ENCODE measurements at regions of chr1 and their contacts with region 1.

Region 1: GRCh38 chr1:169893494-169894362 is at the start of gene SCYL3:
- DNase-seq: peak; percentile 85 to 97 (median 95)
- ATAC-seq: peak; percentile 92
- H3K4me3 ChIP-seq: peak within 1 kb of the TSS; percentile 77
- H3K4me3 Mint-ChIP-seq: peak within 1 kb of the TSS; percentile 85 to 97 (median 94)
- H3K27ac ChIP-seq: peak within 1 kb of the TSS; percentile 95
- H3K27ac Mint-ChIP-seq: peak within 1 kb of the TSS; percentile 98 to 100 (median 100)
- H3K4me1 ChIP-seq: peaks cover 25 to 28% of the 10 kb centered on the region in 2 donors
- H3K4me1 Mint-ChIP-seq: peaks cover 26 to 51% (median 46%) of the 10 kb centered on the region in 7 donors
- H3K27me3 ChIP-seq: no peaks in the 10 kb centered on the region
- H3K27me3 Mint-ChIP-seq: peaks cover 0 to 18% (median 4%) of the 10 kb centered on the region in 5 donors
- total RNA-seq, gene SCYL3: 9.5 to 22.7 (median 17.3) TPM

Region 2: GRCh38 chr1:169106095-169106920 is 787.4 kb before region 1 on chr1 and contains the start of gene ATP1B1:
- CTCF ChIA-PET with region 1: no interaction called
- POLR2A ChIA-PET with region 1: no interaction called
- intact Hi-C with region 1: loop called in 1 of 2 experiments (anchors 2 kb)
- DNase-seq: peak; percentile 66 to 90 (median 76)
- ATAC-seq: peak; percentile 95
- H3K4me3 ChIP-seq: peak within 1 kb of the TSS; percentile 67
- H3K4me3 Mint-ChIP-seq: peak within 1 kb of the TSS; percentile 81 to 93 (median 88)
- H3K27ac ChIP-seq: peak within 1 kb of the TSS; percentile 58
- H3K27ac Mint-ChIP-seq: peak within 1 kb of the TSS in 8 of 9 donors; percentile 29 to 85 (median 56)
- H3K4me1 ChIP-seq: peaks cover 7 to 21% of the 10 kb centered on the region in 2 donors
- H3K4me1 Mint-ChIP-seq: peaks cover 24 to 48% (median 40%) of the 10 kb centered on the region in 7 donors
- H3K27me3 ChIP-seq: no peaks in the 10 kb centered on the region
- H3K27me3 Mint-ChIP-seq: peaks cover 0 to 19% (median 0%) of the 10 kb centered on the region in 5 donors
- total RNA-seq, gene ATP1B1: 1.8 to 10.6 (median 2.3) TPM

Region 3: GRCh38 chr1:169601093-169601881 is 292.4 kb before region 1 on chr1:
- CTCF ChIA-PET with region 1: no interaction called
- POLR2A ChIA-PET with region 1: no interaction called
- intact Hi-C with region 1: loop called in 1 of 2 experiments (anchors 5 kb)
- DNase-seq: peak in 6 of 9 donors; percentile 17 to 51 (median 36)
- ATAC-seq: no peak
- H3K4me3 ChIP-seq: no peak overlapping the region
- H3K4me3 Mint-ChIP-seq: peak overlapping the region in 6 of 10 donors; percentile 38 to 79 (median 54)
- H3K27ac ChIP-seq: peak overlapping the region; percentile 61
- H3K27ac Mint-ChIP-seq: peak overlapping the region; percentile 47 to 96 (median 89)
- H3K4me1 ChIP-seq: peaks cover 17 to 49% of the 10 kb centered on the region in 2 donors
- H3K4me1 Mint-ChIP-seq: peaks cover 43 to 58% (median 55%) of the 10 kb centered on the region in 7 donors
- H3K27me3 ChIP-seq: no peaks in the 10 kb centered on the region
- H3K27me3 Mint-ChIP-seq: peaks cover 0 to 2% (median 0%) of the 10 kb centered on the region in 5 donors

Region 4: GRCh38 chr1:169874229-169874628 is 19.5 kb before region 1 on chr1:
- CTCF ChIA-PET with region 1: no interaction called
- POLR2A ChIA-PET with region 1: interaction called, 4 read pairs
- intact Hi-C with region 1: loop called in 1 of 2 experiments (anchors 1 kb)
- DNase-seq: no peak
- ATAC-seq: no peak
- H3K4me3 ChIP-seq: no peak overlapping the region
- H3K4me3 Mint-ChIP-seq: no peak overlapping the region
- H3K27ac ChIP-seq: no peak overlapping the region
- H3K27ac Mint-ChIP-seq: peak overlapping the region in 3 of 9 donors; percentile 3 to 56 (median 22)
- H3K4me1 ChIP-seq: no peaks in the 10 kb centered on the region
- H3K4me1 Mint-ChIP-seq: peaks cover 5 to 35% (median 25%) of the 10 kb centered on the region in 7 donors
- H3K27me3 ChIP-seq: no peaks in the 10 kb centered on the region
- H3K27me3 Mint-ChIP-seq: no peaks in the 10 kb centered on the region

Region 5: DNA sequence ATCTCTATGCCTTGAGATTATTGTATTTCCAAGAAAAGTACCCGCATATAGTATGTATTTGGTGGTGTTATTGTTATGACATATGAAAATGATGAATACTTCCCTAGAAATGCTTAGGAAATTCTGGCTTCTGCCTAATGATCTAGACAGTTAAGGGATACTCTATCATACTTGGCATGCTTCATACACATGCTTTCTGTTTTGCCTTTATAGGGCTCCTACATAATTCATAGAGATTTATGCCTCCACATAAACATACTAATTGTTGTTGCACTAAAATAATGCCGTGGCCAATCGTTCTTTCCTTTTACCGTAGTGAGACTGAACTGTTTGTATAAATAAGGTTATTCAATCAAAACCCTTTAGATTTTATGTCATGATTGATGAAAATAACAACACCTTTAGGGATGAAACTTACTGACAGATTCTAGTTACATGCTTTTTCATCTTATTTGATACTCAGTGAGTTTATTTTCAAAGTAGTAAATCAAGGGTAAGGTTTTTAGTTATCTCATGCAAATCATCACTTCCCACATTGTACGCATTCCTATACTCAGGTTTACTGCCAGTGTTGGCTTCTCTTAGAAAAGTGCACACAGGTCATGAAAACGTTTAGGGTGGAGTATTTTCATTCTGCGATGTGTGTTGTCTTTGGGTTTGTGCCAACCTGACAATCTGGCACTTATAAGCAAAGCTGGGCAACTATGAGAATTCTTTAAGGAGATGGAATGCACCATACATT is 40.4 kb after region 1 on chr1:
- CTCF ChIA-PET with region 1: no interaction called
- POLR2A ChIA-PET with region 1: no interaction called
- intact Hi-C with region 1: no loop called
- DNase-seq: no peak
- ATAC-seq: no peak
- H3K4me3 ChIP-seq: no peak overlapping the region
- H3K4me3 Mint-ChIP-seq: no peak overlapping the region
- H3K27ac ChIP-seq: no peak overlapping the region
- H3K27ac Mint-ChIP-seq: peak overlapping the region in 1 of 9 donors; percentile 2
- H3K4me1 ChIP-seq: no peaks in the 10 kb centered on the region
- H3K4me1 Mint-ChIP-seq: no peaks in the 10 kb centered on the region
- H3K27me3 ChIP-seq: no peaks in the 10 kb centered on the region
- H3K27me3 Mint-ChIP-seq: peaks cover 0 to 5% (median 0%) of the 10 kb centered on the region in 5 donors

Region 6: GRCh38 chr1:170074250-170075157 is 180.8 kb after region 1 on chr1 and contains the start of gene KIFAP3:
- CTCF ChIA-PET with region 1: interaction called, 3 read pairs
- POLR2A ChIA-PET with region 1: interaction called, 7 read pairs
- intact Hi-C with region 1: loop called (anchors 1 kb)
- DNase-seq: peak; percentile 84 to 94 (median 92)
- ATAC-seq: peak; percentile 96
- H3K4me3 ChIP-seq: peak within 1 kb of the TSS; percentile 76
- H3K4me3 Mint-ChIP-seq: peak within 1 kb of the TSS; percentile 89 to 99 (median 96)
- H3K27ac ChIP-seq: peak within 1 kb of the TSS; percentile 90
- H3K27ac Mint-ChIP-seq: peak within 1 kb of the TSS; percentile 83 to 98 (median 94)
- H3K4me1 ChIP-seq: peaks cover 15 to 37% of the 10 kb centered on the region in 2 donors
- H3K4me1 Mint-ChIP-seq: peaks cover 34 to 65% (median 57%) of the 10 kb centered on the region in 7 donors
- H3K27me3 ChIP-seq: no peaks in the 10 kb centered on the region
- H3K27me3 Mint-ChIP-seq: peaks cover 0 to 3% (median 0%) of the 10 kb centered on the region in 5 donors
- total RNA-seq, gene KIFAP3: 12.8 to 23.8 (median 20.1) TPM

Region 7: DNA sequence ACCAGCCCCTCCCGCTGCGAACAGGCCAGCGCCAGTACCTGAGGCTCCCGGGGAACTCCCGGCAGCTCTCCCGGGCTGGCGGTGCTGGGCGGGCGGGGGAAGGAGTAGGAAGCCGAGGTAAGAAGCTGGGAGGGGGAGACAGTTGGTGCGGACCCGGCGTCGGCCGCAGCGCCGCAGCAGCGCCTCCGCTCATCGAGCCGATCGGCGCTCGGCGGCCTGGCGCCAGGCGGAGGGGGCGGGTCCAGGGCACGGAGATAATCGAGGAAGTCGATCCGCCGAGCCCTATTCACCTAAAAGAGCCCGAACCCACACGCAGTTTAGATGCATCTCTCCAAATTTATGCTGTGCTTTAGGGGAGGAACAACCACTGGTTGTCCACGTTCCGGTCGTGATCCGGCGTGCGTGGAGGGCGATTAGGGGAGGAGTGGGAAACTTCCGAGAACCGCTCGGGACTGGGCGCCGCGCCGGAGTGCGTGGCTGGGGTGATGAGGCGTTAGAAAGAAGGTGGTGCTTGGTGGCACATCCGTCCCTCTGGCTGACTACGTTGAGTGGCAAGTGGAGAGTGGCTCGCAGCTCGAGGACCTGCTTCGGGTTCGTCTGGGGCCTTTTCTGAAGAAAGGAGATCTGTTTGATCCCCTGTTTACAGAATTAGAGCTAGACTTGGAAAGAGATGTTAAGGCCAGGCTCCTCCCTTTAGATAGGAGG is 1848.3 kb after region 1 on chr1 and contains the start of gene VAMP4:
- CTCF ChIA-PET with region 1: no interaction called
- POLR2A ChIA-PET with region 1: interaction called, 6 read pairs
- intact Hi-C with region 1: loop called (anchors 1 to 5 kb)
- DNase-seq: peak; percentile 78 to 90 (median 87)
- ATAC-seq: peak; percentile 90
- H3K4me3 ChIP-seq: peak within 1 kb of the TSS; percentile 95
- H3K4me3 Mint-ChIP-seq: peak within 1 kb of the TSS; percentile 97 to 100 (median 99)
- H3K27ac ChIP-seq: peak within 1 kb of the TSS; percentile 95
- H3K27ac Mint-ChIP-seq: peak within 1 kb of the TSS; percentile 98 to 100 (median 100)
- H3K4me1 ChIP-seq: peaks cover 30 to 34% of the 10 kb centered on the region in 2 donors
- H3K4me1 Mint-ChIP-seq: peaks cover 25 to 62% (median 57%) of the 10 kb centered on the region in 7 donors
- H3K27me3 ChIP-seq: no peaks in the 10 kb centered on the region
- H3K27me3 Mint-ChIP-seq: no peaks in the 10 kb centered on the region
- total RNA-seq, gene VAMP4: 16.2 to 27.2 (median 19.7) TPM